ENCODE measurements at regions of chr3 and their contacts with region 1.

Region 1: GRCh38 chr3:88180398-88180999 is 30.7 kb downstream of the C3orf38 start:
- DNase-seq: peak; percentile 80
- H3K4me3 Mint-ChIP-seq: no peak overlapping the region
- H3K27ac Mint-ChIP-seq: no peak overlapping the region
- H3K4me1 Mint-ChIP-seq: no peaks in the 10 kb centered on the region
- H3K27me3 Mint-ChIP-seq: peaks cover 15% of the 10 kb centered on the region

Region 2: DNA sequence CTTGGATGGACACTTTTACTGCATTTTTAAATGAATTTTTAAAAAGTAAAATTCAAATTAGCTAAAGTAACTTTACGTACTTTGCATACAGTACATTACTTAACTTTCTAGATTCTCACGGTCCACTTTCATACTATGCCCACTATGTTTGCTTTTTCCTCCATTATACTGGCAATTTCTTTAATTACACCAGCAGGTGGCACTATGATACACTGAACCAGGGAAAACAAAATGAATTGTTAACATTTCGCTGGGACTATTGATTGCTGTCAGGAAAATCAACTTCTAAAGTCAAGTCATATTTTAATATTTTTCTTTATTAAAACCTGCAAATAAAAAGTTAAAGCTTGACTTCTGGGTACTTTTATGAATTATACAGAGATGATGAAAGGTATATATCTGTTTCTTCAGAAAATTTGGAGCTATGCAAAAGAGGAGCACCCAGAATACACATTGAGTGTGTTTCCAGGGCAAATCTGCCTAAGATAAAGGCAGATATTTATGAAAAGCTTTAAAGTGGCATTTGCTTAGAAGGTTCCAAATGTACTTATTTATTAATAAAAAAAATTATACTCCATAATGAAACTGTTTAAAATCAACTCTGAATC is 882.3 kb before region 1 on chr3:
- intact Hi-C with region 1: loop called (anchors 2 kb)
- DNase-seq: no peak
- H3K4me3 Mint-ChIP-seq: no peak overlapping the region
- H3K27ac Mint-ChIP-seq: no peak overlapping the region
- H3K4me1 Mint-ChIP-seq: no peaks in the 10 kb centered on the region
- H3K27me3 Mint-ChIP-seq: peaks cover 2% of the 10 kb centered on the region

Region 3: GRCh38 chr3:88410259-88410658 is 229.8 kb after region 1 on chr3:
- intact Hi-C with region 1: no loop called
- DNase-seq: peak; percentile 60
- H3K4me3 Mint-ChIP-seq: no peak overlapping the region
- H3K27ac Mint-ChIP-seq: no peak overlapping the region
- H3K4me1 Mint-ChIP-seq: no peaks in the 10 kb centered on the region
- H3K27me3 Mint-ChIP-seq: no peaks in the 10 kb centered on the region